Activated B cell treated with CpG ODN at 0.5 μM for 24 hours (primary cell): ENCODE measurements at regions of chr11 and their contacts with region 1.

Region 1: DNA sequence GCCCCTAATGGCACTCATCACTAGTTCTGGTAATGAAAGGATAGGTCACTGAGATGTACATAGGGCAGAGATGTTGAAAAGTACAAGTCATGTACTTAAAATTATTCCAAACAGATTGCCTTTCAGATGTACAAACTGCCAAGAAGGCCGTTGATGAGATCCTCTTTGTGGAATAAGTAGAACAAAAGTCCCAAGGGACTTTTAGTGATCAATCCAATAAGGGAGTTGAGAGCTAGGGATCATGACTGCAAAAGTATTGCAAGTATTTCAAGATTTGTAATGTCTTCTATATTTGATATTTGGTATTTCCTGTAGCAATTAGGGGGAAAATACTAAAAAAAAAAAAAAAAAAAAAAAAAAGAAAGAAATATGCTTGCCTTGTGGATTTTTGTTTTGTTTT is 82.2 kb downstream of the ATG16L2 start:
- DNase-seq: no peak
- ATAC-seq: no peak
- H3K4me3 Mint-ChIP-seq: no peak overlapping the region
- H3K27ac Mint-ChIP-seq: no peak overlapping the region
- H3K4me1 Mint-ChIP-seq: peaks cover 8% of the 10 kb centered on the region
- H3K27me3 Mint-ChIP-seq: no peaks in the 10 kb centered on the region
- CTCF ChIP-seq: no peak

Region 2: DNA sequence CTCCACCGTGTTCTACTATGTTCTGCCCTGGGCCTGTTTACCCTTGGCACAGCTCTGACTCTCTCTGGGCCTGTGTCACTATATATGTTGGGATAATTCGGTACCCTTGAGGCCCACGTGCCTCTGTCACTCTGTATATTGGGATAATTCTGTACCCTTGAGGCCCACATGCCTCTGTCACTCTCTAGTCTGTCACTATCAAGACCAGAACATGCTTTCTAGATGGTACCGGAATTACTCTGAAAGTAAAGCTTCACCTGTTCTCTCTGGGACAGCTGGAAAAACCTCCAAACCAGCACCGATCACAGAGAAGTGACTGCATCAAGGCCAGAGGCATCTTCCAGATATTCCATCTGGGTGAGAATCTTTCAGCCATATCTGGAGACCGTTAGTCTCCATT is 255.0 kb after region 1 on chr11:
- CTCF ChIA-PET with region 1: no interaction called
- POLR2A ChIA-PET with region 1: interaction called, 17 read pairs
- intact Hi-C with region 1: no loop called
- DNase-seq: no peak
- ATAC-seq: no peak
- H3K4me3 Mint-ChIP-seq: no peak overlapping the region
- H3K27ac Mint-ChIP-seq: peak overlapping the region; percentile 97
- H3K4me1 Mint-ChIP-seq: peaks cover 99% of the 10 kb centered on the region
- H3K27me3 Mint-ChIP-seq: no peaks in the 10 kb centered on the region
- CTCF ChIP-seq: no peak